ENCODE measurements at regions of chr2 and their contacts with region 1.

Region 1: DNA sequence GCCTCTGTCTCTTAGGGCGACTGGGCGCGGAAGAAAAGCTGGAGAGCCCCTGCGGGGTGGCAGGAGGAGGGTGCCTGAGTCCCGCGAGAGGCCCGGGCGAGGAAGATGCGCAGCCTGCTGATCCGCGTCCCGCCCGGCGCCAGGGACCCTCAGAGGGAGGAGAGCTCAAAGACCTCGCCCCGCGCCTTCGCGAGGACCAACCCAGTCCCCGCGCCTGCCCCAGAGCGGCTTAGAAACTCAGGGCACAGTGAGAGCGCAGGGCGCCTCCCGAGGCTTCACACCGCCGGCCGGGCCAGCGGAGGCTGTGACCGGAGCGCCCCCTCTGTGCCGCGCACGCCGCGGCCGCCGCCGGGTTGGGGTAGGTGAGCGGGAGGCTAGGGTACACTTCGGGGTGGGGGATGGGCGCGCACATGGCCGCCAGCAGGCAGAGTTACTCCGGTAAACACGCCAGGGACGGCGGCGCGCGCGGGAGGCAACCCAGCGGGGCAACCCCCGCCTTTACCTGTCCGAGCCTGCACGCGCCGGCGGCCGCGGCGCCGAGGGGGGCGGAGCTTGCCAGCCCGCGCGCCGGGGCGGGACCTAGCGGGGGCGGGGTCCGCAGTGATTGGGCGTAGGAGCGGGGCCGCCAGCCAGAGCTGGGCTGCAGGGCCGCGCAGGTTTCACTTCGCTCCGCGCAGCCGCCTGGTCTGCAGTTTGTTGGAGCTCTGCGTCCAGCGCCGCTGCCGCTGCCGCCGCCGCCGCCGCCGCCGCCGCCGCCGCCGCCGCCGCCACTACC is at the start of gene BCL2L11:
- DNase-seq: peak; percentile 87 to 90 (median 88)
- H3K4me3 ChIP-seq: peak within 1 kb of the TSS; percentile 89 to 98 (median 97)
- H3K4me3 Mint-ChIP-seq: peak within 1 kb of the TSS; percentile 95 to 98
- H3K27ac ChIP-seq: peak within 1 kb of the TSS; percentile 85 to 90
- H3K27ac Mint-ChIP-seq: peak within 1 kb of the TSS; percentile 88 to 94 (median 93)
- H3K4me1 ChIP-seq: peaks cover 60 to 63% of the 10 kb centered on the region in 2 donors
- H3K4me1 Mint-ChIP-seq: peaks cover 51% of the 10 kb centered on the region
- H3K27me3 ChIP-seq: peaks cover 33 to 51% of the 10 kb centered on the region in 2 donors
- H3K27me3 Mint-ChIP-seq: peaks cover 49 to 58% (median 51%) of the 10 kb centered on the region in 3 donors
- CTCF ChIP-seq: no peak
- polyA plus RNA-seq, gene BCL2L11: 8.8 to 27.6 (median 20.4) TPM

Region 2: DNA sequence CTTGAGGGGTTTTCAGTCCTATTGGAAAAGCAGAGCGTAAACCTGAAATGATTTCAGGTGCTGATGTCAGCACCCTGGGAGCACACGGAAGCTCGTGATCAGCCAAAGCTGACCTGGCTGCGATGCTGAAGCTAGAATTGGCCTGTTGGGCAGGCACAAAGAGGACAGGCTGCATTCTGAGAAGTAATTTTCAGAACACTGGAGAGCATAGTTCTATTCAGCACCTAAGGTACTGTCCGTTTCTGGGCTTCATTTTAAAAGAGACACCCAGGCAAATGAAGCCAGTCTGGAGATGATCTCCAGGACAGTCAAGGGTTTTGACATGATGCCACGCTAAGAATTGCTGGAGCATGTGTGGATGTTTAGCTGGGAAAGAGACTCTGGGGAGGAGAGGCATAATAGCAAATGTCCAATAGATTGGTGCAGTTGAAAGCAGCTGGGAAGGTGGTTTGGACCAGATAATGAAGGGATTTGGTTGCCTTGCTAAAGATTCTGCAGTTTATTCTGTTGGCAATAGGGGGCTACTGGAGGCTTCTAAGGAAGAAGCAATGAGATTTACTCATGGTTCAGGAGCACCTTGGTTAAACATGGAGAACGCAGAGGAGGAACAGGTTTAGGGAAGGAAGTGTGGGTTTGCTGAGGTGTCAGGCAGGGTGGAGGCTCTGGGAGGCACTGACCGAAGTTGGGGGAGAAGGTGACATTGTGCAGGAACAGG is 301.5 kb before region 1 on chr2:
- intact Hi-C with region 1: loop called (anchors 10 kb)
- DNase-seq: no peak
- H3K4me3 ChIP-seq: no peak overlapping the region
- H3K4me3 Mint-ChIP-seq: no peak overlapping the region
- H3K27ac ChIP-seq: no peak overlapping the region
- H3K27ac Mint-ChIP-seq: peak overlapping the region in 2 of 7 donors; percentile 47 to 64
- H3K4me1 ChIP-seq: peaks cover 12 to 15% of the 10 kb centered on the region in 2 donors
- H3K4me1 Mint-ChIP-seq: peaks cover 16% of the 10 kb centered on the region
- H3K27me3 ChIP-seq: no peaks in the 10 kb centered on the region
- H3K27me3 Mint-ChIP-seq: peaks cover 6 to 18% (median 11%) of the 10 kb centered on the region in 3 donors
- CTCF ChIP-seq: no peak

Measured in CD14-positive monocyte (primary cell).